Adrenal gland (tissue), 19 donors: ENCODE measurements at regions of chr1 and their contacts with region 1.

Region 1: DNA sequence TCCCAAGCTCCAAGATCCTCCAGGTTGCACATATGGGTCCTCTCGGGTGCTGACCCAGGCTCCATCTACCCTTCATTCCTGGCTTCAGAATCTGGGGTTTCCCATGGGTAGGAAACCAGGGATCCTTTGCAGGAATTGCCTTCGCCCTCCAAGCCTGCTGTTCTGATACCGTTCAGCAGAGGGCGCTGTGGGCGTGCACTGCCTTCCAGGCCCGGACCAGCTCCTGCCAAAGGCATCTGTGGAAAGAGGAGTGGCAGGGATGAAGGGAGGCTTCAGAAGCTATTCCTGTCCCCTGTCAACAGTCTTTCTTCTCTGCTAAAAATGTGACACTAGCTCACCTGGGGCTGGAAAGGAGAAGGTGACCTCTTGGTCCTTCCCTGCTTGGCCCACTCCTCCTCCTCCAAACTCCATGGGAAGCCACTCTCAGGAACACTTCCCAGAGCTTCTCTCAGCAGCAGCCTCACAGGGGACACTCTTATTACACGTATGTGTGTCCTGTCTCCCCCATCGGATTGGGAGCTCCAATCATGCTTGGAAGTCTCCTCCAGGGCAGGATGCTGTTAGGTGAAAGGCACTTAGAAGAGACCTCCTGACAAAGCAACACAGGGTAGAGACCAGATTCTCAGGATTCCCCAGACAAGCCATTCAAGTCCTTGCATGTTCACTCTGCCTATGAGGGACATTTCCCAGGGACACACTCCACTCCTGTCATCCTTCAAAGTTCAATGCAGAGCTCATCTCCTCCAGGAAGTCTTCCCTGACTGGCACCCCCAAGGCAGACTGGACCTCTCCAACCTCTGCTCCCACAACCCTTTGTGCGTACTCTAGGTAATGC is 71.3 kb downstream of the VWA5B1 start:
- DNase-seq: peak; percentile 54 to 91 (median 75)
- H3K4me3 ChIP-seq: no peak overlapping the region
- H3K27ac ChIP-seq: no peak overlapping the region
- H3K4me1 ChIP-seq: peaks cover 7 to 24% of the 10 kb centered on the region in 2 donors
- H3K27me3 ChIP-seq: peaks cover 22% of the 10 kb centered on the region
- CTCF ChIP-seq: peak; percentile 58 to 89 (median 75)
- POLR2A ChIP-seq: no peak

Region 2: DNA sequence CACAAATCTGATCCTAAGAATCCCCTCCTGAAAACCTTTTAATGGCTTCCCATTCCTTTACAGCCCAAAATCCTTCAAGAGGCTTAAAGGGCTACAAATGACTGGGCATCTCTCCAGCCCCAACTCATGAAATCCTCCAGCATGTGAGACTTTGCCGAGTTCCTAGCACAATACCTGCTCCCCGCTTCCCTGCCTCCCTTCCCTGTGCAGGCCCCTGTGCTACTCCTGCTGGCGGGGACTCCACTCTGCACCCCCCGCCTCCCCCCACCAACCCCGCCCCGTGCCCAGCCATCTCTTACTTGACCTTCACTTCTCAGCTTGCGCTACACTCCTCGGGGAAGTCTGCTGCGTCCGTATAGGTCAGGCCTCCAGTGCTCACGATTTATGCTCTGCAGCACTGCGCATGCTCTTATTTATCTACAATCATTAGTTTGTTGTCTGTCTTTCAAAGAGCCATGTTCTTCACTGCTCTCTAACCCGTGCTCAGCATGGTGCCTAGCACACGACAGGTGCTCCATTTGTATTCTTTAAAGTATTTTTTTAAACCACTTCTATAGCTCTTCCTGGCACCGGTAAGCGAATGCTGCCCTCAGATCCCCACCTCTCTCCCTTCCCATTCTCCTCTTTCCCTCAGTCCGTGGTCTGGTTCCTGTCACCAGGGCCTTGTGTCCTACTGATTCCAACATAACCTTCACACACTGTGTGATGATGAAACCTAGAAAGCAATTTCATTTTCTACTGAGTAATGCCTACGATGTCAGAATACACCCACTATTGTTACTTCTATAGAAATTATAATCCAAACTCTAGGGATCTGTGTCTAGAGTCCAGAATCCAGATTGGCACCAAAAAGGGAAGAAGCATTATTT is 138.2 kb before region 1 on chr1:
- intact Hi-C with region 1: loop called in 1 of 2 experiments (anchors 10 kb)
- DNase-seq: peak in 6 of 7 donors; percentile 21 to 57 (median 34)
- H3K4me3 ChIP-seq: no peak overlapping the region
- H3K27ac ChIP-seq: no peak overlapping the region
- H3K4me1 ChIP-seq: peaks cover 0 to 7% of the 10 kb centered on the region in 2 donors
- H3K27me3 ChIP-seq: no peaks in the 10 kb centered on the region
- CTCF ChIP-seq: no peak
- POLR2A ChIP-seq: no peak

Region 3: DNA sequence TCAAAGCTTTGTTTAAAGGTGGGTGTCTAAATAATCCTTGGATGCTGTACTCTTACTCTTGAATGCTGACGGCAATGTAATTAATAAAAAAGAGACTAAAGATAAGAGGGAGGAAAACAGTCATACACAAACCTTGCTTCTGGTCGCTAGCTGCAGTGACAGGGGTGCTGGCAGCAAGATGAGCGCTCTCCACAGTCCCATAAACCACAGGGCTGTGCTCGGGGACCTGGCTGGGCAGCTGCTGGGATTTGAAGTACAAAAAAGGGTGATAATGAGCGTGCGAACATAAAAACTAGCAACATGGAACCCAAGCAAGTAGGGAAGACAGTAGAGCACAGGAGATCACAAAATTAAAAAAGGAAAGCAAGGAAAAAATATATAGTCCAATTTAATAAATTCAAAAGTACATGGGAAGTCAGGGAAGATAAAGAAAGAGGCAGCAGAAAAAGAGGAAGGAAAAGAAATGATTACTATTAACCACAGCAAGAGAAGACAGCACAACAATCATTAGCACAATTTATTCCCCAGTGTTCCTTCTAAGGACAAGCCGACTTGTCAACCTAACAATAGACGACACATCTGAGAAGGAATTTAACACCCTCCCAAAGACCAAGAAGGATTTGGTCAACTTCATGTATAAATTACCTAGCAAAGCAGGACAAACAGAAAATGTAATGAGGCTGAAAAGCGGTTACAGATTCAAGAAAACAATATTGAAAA is 588.0 kb after region 1 on chr1:
- intact Hi-C with region 1: no loop called
- DNase-seq: no peak
- H3K4me3 ChIP-seq: no peak overlapping the region
- H3K27ac ChIP-seq: no peak overlapping the region
- H3K4me1 ChIP-seq: peaks cover 9 to 16% of the 10 kb centered on the region in 2 donors
- H3K27me3 ChIP-seq: no peaks in the 10 kb centered on the region
- CTCF ChIP-seq: no peak
- POLR2A ChIP-seq: no peak